ENCODE measurements at regions of chr1 and their contacts with region 1.

Region 1: DNA sequence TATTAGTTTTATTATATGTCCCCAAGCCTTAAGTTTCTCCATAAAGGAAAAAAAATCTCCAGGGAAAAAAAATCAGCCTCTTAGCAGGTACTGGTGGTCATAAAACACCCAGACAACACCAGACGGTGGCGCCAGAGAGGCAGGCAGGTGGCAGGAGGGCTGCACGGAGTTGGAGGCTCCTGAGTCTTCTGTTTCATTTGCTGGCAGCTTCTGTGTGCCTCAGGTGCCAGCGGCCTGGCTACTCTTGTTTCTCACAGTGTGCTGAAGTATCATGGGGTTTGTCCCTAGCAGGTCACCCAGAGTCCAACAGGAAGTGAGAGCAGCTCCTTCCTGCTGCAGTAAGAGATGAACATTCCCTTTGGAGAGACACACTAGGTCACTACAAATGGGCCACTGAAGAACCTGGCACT is 123.3 kb upstream of the GADD45A start:
- DNase-seq: peak; percentile 95
- ATAC-seq: peak; percentile 98
- H3K4me3 Mint-ChIP-seq: no peak overlapping the region
- H3K27ac Mint-ChIP-seq: no peak overlapping the region
- H3K4me1 Mint-ChIP-seq: peaks cover 4% of the 10 kb centered on the region
- H3K27me3 Mint-ChIP-seq: peaks cover 4% of the 10 kb centered on the region
- CTCF ChIP-seq: peak; percentile 88

Region 2: GRCh38 chr1:67535474-67535873 is 26.2 kb before region 1 on chr1:
- CTCF ChIA-PET with region 1: interaction called, 25 read pairs
- POLR2A ChIA-PET with region 1: no interaction called
- intact Hi-C with region 1: no loop called
- DNase-seq: peak; percentile 81
- ATAC-seq: peak; percentile 82
- H3K4me3 Mint-ChIP-seq: no peak overlapping the region
- H3K27ac Mint-ChIP-seq: no peak overlapping the region
- H3K4me1 Mint-ChIP-seq: peaks cover 10% of the 10 kb centered on the region
- H3K27me3 Mint-ChIP-seq: peaks cover 2% of the 10 kb centered on the region
- CTCF ChIP-seq: peak; percentile 85

Region 3: DNA sequence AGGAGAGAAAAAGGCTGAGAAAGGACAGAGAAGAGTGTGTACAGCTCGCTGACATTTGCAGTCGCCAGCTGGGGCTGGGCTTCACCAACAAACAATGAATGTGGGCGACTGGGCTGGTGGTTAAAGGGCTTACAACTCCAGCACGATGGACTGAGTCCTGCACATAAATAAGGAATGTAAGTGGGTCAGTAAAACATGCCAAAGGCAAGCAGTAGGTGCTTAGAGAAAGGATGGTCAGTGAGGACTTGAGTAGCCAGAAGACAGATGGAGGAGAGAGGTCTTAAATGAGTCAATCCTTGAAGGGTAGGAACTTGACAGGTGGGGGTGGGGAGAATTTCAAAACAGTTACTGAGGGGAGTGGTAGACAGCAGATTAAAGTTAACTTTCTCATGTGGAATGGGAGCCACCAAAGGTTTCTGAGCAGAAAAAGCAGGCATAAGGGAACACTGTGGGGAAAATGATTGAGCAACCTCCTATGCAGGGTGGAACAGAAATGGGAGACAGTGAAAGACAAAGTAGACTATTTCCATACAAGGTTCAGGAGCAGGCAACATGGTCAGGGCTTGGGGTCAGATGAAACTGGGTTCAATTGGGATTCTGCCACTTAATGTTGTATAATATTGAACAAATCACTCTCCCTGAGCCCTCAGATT is 160.7 kb after region 1 on chr1:
- CTCF ChIA-PET with region 1: interaction called, 10 read pairs
- POLR2A ChIA-PET with region 1: no interaction called
- intact Hi-C with region 1: no loop called
- DNase-seq: no peak
- ATAC-seq: no peak
- H3K4me3 Mint-ChIP-seq: no peak overlapping the region
- H3K27ac Mint-ChIP-seq: no peak overlapping the region
- H3K4me1 Mint-ChIP-seq: peaks cover 6% of the 10 kb centered on the region
- H3K27me3 Mint-ChIP-seq: no peaks in the 10 kb centered on the region
- CTCF ChIP-seq: no peak

Region 4: DNA sequence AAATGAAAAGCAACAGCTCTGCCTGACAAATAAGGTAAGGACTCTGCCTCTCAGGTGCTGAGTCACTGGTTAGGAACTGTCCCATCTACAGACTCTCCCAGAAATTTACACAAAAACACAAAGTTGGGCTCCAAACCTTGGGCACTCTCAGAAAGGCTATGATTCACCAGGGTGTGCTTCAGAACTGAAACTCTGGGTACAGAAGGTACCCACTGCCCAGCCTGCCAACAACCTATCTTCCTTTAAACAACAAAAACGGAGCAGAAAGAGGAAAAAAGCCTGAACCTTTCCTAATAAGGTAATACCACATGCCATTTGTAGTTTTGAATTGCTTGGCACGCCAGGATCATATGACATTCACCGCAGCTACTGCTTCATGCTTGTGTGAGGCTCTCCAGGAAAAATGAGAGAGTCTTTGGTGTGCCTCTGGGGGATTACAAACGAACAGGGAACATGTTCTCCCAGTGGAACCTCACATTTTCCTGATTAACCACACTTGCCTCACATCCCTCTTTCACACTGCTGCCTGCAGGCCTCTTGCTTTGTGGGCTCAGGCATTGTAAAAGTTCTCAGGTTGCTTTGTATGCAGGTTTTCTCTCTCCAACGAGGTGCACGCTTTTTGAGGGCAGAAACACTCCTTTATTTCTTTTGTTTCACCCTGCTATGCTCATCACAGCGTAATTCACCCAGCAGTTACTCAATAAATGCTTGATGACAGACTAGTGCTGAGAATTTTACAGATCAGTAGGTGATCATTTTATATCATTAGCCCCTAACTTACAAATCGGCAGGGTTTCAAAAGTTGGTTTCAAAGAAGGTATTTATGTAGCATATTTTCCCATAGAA is 188.4 kb after region 1 on chr1:
- CTCF ChIA-PET with region 1: interaction called, 25 read pairs
- POLR2A ChIA-PET with region 1: no interaction called
- intact Hi-C with region 1: no loop called
- DNase-seq: no peak
- ATAC-seq: peak; percentile 45
- H3K4me3 Mint-ChIP-seq: no peak overlapping the region
- H3K27ac Mint-ChIP-seq: no peak overlapping the region
- H3K4me1 Mint-ChIP-seq: peaks cover 28% of the 10 kb centered on the region
- H3K27me3 Mint-ChIP-seq: peaks cover 10% of the 10 kb centered on the region
- CTCF ChIP-seq: no peak

Measured in activated CD8-positive, alpha-beta T cell treated with anti-CD3 and anti-CD28 coated beads for 36 hours (primary cell).